SK-N-SH (cell line): ENCODE measurements at regions of chr17 and their contacts with region 1.

Region 1: GRCh38 chr17:41322094-41322902 is 6.8 kb upstream of the KRTAP17-1 start:
- DNase-seq: peak; percentile 50
- H3K4me3 ChIP-seq: no peak overlapping the region
- H3K27ac ChIP-seq: no peak overlapping the region
- H3K4me1 ChIP-seq: no peaks in the 10 kb centered on the region
- H3K27me3 ChIP-seq: no peaks in the 10 kb centered on the region
- CTCF ChIP-seq: peak; percentile 75
- EP300 ChIP-seq: no peak
- RAD21 ChIP-seq: peak; percentile 66

Region 2: DNA sequence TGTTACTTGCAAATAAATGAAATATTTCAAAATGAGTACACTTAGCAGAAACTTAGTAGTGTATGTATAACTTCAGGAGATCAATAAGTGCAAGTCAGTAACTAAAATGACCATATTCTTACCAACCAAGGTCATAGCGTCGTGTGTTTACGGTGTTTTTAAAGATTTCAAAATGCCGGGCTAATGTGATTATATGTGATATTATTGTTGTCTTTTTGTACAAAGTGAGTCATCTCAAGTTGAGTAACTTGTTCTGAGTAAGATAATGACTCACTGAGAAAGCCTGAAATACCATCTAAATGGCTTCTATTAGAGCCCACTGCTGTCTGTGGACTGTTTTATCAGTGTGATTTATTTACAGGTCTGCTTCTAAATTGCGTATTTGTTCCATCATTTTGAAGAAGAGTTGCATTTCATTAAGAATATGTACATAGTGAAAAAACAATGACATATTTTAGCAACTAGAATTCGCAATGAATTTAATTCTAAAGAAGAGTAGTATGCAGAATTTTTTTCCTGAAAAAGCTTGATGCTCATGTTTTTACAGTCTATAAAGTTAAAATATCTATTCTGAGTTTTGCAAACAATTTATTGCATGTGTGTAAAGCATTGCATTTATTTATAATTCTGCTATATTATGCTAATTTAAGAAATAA is 468.0 kb before region 1 on chr17:
- CTCF ChIA-PET with region 1: interaction called, 10 read pairs
- POLR2A ChIA-PET with region 1: no interaction called
- DNase-seq: no peak
- H3K4me3 ChIP-seq: no peak overlapping the region
- H3K27ac ChIP-seq: peak overlapping the region in 1 of 2 experiments; percentile 48; a peak in 2 of 4 replicates
- H3K4me1 ChIP-seq: peaks cover 6 to 8% of the 10 kb centered on the region in 2 experiments; a peak in 2 of 4 replicates
- H3K27me3 ChIP-seq: no peaks in the 10 kb centered on the region
- CTCF ChIP-seq: no peak
- EP300 ChIP-seq: peak in 1 of 2 experiments; percentile 62; a peak in 1 of 4 replicates
- RAD21 ChIP-seq: no peak

Region 3: DNA sequence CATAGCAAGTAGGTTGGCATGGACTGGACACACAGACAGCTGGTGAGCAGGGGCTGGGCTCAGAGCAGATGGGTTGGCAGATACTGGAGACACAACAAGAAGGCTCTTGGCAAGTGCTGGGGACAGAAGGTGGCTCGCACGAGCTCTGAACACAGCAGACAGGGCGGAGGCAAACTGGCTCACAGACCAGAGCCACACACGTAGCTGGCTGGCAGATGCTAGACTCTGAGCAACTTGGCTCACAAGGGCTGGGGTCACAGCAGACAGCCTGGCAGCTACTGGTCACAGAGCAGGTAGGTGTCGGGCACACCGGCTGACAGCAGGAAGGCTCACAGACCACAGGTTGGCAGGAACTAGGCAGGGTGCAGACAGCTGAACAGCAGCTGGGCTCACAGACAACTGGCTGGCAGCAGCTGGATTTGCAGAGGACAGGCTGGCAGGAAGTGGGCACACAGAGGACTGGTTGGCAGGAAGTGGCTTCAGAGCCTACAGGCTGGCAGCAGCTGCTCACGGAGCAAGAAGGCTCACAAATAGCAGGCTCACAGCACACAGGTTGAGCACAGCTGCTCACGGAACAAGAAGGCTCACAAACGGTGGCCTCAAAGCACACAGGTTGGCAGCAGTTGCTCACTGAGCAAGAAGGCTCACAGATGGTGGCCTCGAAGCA is 13.9 kb before region 1 on chr17:
- CTCF ChIA-PET with region 1: interaction called, 20 read pairs
- POLR2A ChIA-PET with region 1: no interaction called
- DNase-seq: no peak
- H3K4me3 ChIP-seq: no peak overlapping the region
- H3K27ac ChIP-seq: no peak overlapping the region; a peak in 1 of 4 replicates
- H3K4me1 ChIP-seq: peaks cover 0 to 13% of the 10 kb centered on the region in 2 experiments; a peak in 1 of 4 replicates
- H3K27me3 ChIP-seq: peaks cover 23% of the 10 kb centered on the region; the same call in 1 of the 2 replicates
- CTCF ChIP-seq: no peak
- EP300 ChIP-seq: no peak
- RAD21 ChIP-seq: no peak